ENCODE measurements at regions of chr2 and their contacts with region 1.

Region 1: GRCh38 chr2:221478485-221478863 is 93.6 kb downstream of the EPHA4 start:
- DNase-seq: no peak
- H3K4me3 ChIP-seq: no peak overlapping the region
- H3K27ac ChIP-seq: no peak overlapping the region
- H3K4me1 ChIP-seq: no peaks in the 10 kb centered on the region
- H3K27me3 ChIP-seq: no peaks in the 10 kb centered on the region
- CTCF ChIP-seq: no peak
- POLR2A ChIP-seq: no peak

Region 2: GRCh38 chr2:220162320-220162719 is 1316.2 kb before region 1 on chr2:
- intact Hi-C with region 1: loop called (anchors 5 kb)
- DNase-seq: no peak
- H3K4me3 ChIP-seq: no peak overlapping the region
- H3K27ac ChIP-seq: no peak overlapping the region
- H3K4me1 ChIP-seq: no peaks in the 10 kb centered on the region
- H3K27me3 ChIP-seq: no peaks in the 10 kb centered on the region
- CTCF ChIP-seq: no peak
- POLR2A ChIP-seq: no peak

Region 3: DNA sequence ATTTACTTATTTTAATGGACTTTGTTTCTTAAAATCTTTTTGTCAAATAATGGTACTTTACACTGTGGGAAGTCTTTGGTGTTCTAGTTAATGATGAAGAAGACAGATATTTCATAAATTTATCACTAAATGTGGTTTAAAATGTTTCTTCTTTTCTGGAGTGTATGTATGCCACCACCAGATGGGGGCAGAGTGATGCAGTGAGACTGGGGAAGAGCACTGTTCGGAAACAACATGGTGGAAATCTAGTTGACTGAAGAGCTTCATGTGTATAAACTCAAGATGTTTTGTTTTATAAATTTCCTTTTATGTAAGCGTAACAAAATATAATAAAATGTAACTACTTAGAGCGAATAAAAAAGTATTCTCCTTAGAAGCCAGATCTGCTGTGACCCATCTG is 1768.7 kb after region 1 on chr2:
- intact Hi-C with region 1: no loop called
- DNase-seq: no peak
- H3K4me3 ChIP-seq: no peak overlapping the region
- H3K27ac ChIP-seq: no peak overlapping the region
- H3K4me1 ChIP-seq: no peaks in the 10 kb centered on the region
- H3K27me3 ChIP-seq: no peaks in the 10 kb centered on the region
- CTCF ChIP-seq: no peak
- POLR2A ChIP-seq: no peak

Measured in breast epithelium (tissue), 4 donors.